ENCODE measurements at regions of chr1 and their contacts with region 1.

Region 1: GRCh38 chr1:84690397-84691121 is at the start of gene SSX2IP:
- DNase-seq: peak; percentile 100
- H3K4me3 Mint-ChIP-seq: peak within 1 kb of the TSS; percentile 92
- H3K27ac Mint-ChIP-seq: peak within 1 kb of the TSS; percentile 91
- H3K4me1 Mint-ChIP-seq: peaks cover 59% of the 10 kb centered on the region
- H3K27me3 Mint-ChIP-seq: peaks cover 3% of the 10 kb centered on the region
- total RNA-seq, gene SSX2IP: 11.9 to 12.6 TPM

Region 2: DNA sequence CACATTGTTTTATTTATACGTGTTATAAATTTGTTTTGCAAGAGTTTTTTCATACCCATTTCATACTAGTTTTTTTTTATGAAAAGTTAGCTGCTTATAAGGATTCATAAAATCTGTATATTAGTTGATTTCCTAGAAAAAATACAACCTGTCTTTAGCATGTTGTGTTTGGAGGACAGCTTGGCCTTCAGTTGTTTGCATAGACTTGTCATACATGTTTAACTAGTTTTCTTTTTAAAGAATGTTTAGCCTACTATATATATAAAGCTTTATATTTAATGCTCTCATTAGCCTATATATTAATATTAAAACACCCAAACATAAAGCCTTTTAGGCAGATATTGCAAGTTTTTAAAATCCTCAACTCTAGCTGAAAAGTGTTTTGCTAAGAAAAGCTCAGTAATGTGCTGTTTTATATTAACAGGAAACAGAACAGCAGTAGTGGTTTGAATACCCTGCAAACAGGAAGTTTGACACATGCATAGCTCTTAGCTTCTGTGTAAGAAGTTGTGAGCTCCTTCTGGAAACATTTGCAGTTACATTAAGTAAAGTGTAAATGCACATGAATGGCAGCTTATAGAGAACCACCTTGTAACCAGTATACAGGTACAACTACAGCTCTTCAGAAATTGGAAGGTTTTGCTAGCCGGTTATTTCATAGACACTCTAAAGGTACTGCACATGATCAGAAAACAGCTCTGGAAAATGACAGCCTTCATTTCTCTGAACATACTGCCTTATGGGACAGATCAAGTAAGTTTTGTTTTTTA is 546.6 kb before region 1 on chr1 and contains the start of gene PRKACB:
- CTCF ChIA-PET with region 1: interaction called, 3 read pairs
- intact Hi-C with region 1: loop called (anchors 1 kb)
- DNase-seq: peak; percentile 21
- H3K4me3 Mint-ChIP-seq: peak within 1 kb of the TSS; percentile 89
- H3K27ac Mint-ChIP-seq: peak within 1 kb of the TSS; percentile 98
- H3K4me1 Mint-ChIP-seq: peaks cover 35% of the 10 kb centered on the region
- H3K27me3 Mint-ChIP-seq: no peaks in the 10 kb centered on the region
- total RNA-seq, gene PRKACB: 25.7 to 25.9 TPM

Region 3: GRCh38 chr1:84478876-84479868 is 211.4 kb before region 1 on chr1 and contains the start of gene RPF1:
- CTCF ChIA-PET with region 1: no interaction called
- intact Hi-C with region 1: loop called (anchors 1 kb)
- DNase-seq: peak; percentile 74
- H3K4me3 Mint-ChIP-seq: peak within 1 kb of the TSS; percentile 99
- H3K27ac Mint-ChIP-seq: peak within 1 kb of the TSS; percentile 95
- H3K4me1 Mint-ChIP-seq: peaks cover 34% of the 10 kb centered on the region
- H3K27me3 Mint-ChIP-seq: peaks cover 18% of the 10 kb centered on the region
- total RNA-seq, gene RPF1: 57.2 to 57.6 TPM

Region 4: GRCh38 chr1:84620720-84621313 is 69.7 kb before region 1 on chr1:
- CTCF ChIA-PET with region 1: interaction called, 4 read pairs
- intact Hi-C with region 1: loop called (anchors 1 kb)
- DNase-seq: peak; percentile 85
- H3K4me3 Mint-ChIP-seq: peak overlapping the region; percentile 93
- H3K27ac Mint-ChIP-seq: peak overlapping the region; percentile 94
- H3K4me1 Mint-ChIP-seq: peaks cover 18% of the 10 kb centered on the region
- H3K27me3 Mint-ChIP-seq: no peaks in the 10 kb centered on the region

Region 5: GRCh38 chr1:84862810-84863251 is 172.3 kb after region 1 on chr1:
- CTCF ChIA-PET with region 1: no interaction called
- intact Hi-C with region 1: loop called (anchors 1 kb)
- DNase-seq: peak; percentile 63
- H3K4me3 Mint-ChIP-seq: peak overlapping the region; percentile 16
- H3K27ac Mint-ChIP-seq: peak overlapping the region; percentile 51
- H3K4me1 Mint-ChIP-seq: peaks cover 49% of the 10 kb centered on the region
- H3K27me3 Mint-ChIP-seq: peaks cover 3% of the 10 kb centered on the region

Region 6: DNA sequence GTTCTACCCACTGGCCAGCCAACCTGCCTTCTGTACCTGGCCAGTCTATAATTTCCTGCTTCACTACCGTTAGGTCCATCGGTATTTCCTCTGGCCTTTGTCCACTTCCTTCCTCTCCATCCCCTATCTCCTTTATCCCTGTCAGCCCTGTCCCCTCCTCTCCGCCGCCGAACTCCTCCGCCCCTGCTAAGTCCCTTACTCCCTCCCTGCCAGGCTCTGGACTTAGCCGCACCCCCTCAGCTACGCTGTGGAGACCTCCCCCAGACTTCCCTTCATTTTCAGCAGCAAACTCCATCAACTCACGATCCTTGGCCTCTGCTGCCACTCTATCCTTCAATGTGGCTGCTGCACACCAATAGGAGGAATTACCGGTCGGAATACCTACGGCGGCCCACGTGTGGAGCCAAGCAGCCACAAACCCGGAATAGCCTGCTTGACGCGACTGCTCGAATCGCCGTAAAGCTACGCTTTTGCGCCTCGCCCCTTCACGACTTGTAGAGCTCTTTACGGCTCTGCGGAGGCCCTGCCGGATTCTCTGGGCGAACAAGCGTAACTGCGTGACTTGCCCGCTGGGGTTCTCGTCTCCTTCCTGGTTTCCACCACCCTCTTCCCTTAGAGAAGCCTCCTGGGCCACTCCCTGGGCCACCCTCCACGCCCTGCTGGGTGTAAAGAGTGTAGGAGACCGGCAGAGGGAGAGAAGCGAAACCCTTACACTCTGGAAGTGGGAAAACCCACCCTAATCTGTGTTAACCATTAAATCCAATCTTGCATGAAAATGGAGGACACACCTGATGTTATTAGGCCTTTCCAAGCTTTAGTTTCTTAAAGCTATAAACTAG is 1017.6 kb after region 1 on chr1 and contains the start of gene ZNHIT6:
- CTCF ChIA-PET with region 1: no interaction called
- intact Hi-C with region 1: loop called (anchors 1 kb)
- DNase-seq: peak; percentile 93
- H3K4me3 Mint-ChIP-seq: no peak within 1 kb of the TSS
- H3K27ac Mint-ChIP-seq: no peak within 1 kb of the TSS
- H3K4me1 Mint-ChIP-seq: peaks cover 21% of the 10 kb centered on the region
- H3K27me3 Mint-ChIP-seq: no peaks in the 10 kb centered on the region
- total RNA-seq, gene ZNHIT6: 19.8 to 19.9 TPM

Region 7: DNA sequence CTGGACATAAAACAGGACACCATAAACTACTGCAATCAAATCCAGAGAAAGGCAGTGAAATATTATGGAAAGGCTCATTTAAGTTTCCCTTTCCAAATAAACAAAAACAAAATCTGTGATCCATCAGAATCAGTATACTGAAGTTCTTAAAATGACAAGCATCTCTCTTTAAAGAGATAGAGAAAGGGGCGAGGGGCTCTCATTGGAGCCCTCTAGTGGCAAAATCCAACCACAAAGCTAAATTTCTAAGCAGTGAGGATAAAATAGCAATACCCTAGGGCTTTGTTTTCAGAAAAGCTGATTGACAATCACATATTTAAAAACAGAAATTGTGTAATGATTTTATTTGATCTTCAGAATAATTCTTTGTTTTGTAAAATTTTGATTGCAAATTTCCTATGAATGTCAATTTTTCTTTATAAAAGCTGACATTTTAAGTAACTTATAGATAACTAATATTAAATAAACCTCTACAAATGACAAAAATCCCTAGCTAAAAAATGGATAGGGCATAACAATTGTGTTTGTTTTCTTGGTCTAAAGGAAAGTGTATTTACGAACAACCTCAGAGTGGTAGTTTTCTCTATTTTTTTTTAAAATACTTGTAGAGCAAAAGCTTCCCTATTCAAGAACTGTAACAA is 1327.8 kb after region 1 on chr1:
- CTCF ChIA-PET with region 1: no interaction called
- intact Hi-C with region 1: no loop called
- DNase-seq: peak; percentile 13
- H3K4me3 Mint-ChIP-seq: no peak overlapping the region
- H3K27ac Mint-ChIP-seq: no peak overlapping the region
- H3K4me1 Mint-ChIP-seq: no peaks in the 10 kb centered on the region
- H3K27me3 Mint-ChIP-seq: no peaks in the 10 kb centered on the region